Right cardiac atrium (tissue), 5 donors: ENCODE measurements at regions of chr7 and their contacts with region 1.

Region 1: GRCh38 chr7:1569833-1570633 is at the start of gene PSMG3:
- DNase-seq: peak; percentile 95 to 98 (median 97)
- ATAC-seq: peak; percentile 97 to 98
- H3K4me3 ChIP-seq: peak within 1 kb of the TSS; percentile 78
- H3K27ac ChIP-seq: peak within 1 kb of the TSS; percentile 90
- H3K4me1 ChIP-seq: no peaks in the 10 kb centered on the region
- H3K27me3 ChIP-seq: no peaks in the 10 kb centered on the region
- total RNA-seq, gene PSMG3: 11.6 to 16.2 (median 13.9) TPM

Region 2: GRCh38 chr7:1397491-1398327 is 172.3 kb before region 1 on chr7:
- intact Hi-C with region 1: no loop called
- DNase-seq: no peak
- ATAC-seq: no peak
- H3K4me3 ChIP-seq: no peak overlapping the region
- H3K27ac ChIP-seq: no peak overlapping the region
- H3K4me1 ChIP-seq: no peaks in the 10 kb centered on the region
- H3K27me3 ChIP-seq: no peaks in the 10 kb centered on the region

Region 3: DNA sequence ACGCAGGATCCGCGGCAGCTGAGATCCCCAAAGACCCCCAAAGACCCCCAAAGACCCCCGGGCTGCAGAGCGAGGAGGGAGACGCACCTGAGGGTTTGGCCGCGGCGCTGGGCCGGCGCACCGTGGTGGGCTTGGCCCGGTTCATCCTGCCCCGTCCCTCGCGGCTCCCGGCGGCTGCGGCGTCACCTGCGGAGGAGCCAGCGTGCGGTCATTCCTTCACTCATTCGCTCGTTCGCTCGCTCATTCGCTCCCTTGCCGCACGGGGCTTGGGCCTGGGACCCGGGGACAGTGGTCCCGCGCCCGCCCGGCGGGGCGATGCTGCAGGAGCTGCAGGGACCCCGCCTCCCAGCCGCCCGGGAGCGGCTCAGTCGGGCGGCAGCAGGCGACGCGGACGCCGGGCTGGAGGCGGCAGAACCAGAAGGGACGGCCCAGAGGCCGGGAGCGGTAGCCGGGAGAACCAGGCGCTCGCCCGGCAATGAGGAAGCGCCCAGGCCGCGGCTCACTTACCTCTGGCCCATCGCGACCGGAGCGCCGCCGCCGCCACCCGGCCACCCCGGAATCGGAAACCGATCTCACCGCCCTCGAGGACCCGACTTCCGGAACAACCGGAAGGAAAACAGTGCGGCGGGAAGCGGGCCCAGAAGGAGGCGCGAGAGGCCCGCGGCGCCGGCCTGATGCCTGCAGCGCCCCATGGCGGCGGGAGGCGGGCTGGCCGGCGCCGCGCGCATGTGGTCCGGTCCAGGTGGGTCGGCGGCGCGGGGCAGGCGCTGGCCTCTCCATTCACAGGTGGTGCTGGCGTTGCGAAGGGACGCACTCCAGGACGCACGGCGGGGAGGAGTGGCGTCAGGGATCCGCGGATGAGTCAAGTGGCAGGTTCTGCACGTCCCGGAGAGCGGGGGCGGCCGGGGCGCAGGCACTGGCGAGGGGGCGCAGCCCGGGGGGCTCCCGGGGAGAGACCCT is 65.9 kb before region 1 on chr7 and contains the start of gene INTS1:
- intact Hi-C with region 1: loop called in 1 of 4 experiments (anchors 10 kb)
- DNase-seq: peak; percentile 92 to 96 (median 96)
- ATAC-seq: peak; percentile 89 to 94
- H3K4me3 ChIP-seq: peak within 1 kb of the TSS; percentile 74
- H3K27ac ChIP-seq: no peak within 1 kb of the TSS
- H3K4me1 ChIP-seq: peaks cover 7% of the 10 kb centered on the region
- H3K27me3 ChIP-seq: no peaks in the 10 kb centered on the region
- total RNA-seq, gene INTS1: 30.6 to 48.3 (median 46.3) TPM

Region 4: GRCh38 chr7:2209146-2209960 is 639.3 kb after region 1 on chr7:
- intact Hi-C with region 1: loop called in 2 of 4 experiments (anchors 10 kb)
- DNase-seq: peak; percentile 77 to 90 (median 90)
- ATAC-seq: peak; percentile 58 to 75
- H3K4me3 ChIP-seq: no peak overlapping the region
- H3K27ac ChIP-seq: no peak overlapping the region
- H3K4me1 ChIP-seq: peaks cover 2% of the 10 kb centered on the region
- H3K27me3 ChIP-seq: no peaks in the 10 kb centered on the region

Region 5: DNA sequence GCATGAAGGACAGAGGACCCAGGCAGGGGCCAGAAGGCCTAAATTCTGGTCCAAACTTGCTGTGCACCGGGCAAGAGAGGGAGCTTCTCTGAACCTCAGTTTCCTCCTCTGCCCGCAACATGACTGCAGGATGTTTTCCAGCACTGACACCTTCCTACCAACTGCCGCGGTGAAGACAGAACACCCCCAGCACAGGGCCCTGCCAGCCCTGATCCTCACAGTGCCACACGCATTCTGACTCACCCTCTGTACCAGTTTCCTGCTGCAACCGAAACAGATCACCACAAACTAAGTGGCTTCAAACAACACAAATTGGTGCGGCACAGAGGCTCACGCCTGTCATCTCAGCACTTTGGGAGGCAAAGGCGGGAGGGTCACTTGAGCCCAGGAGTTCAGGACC is 644.6 kb after region 1 on chr7:
- intact Hi-C with region 1: loop called in 2 of 4 experiments (anchors 10 kb)
- DNase-seq: peak in 2 of 3 donors; percentile 31 to 57
- ATAC-seq: peak; percentile 42 to 61
- H3K4me3 ChIP-seq: no peak overlapping the region
- H3K27ac ChIP-seq: peak overlapping the region; percentile 89
- H3K4me1 ChIP-seq: peaks cover 4% of the 10 kb centered on the region
- H3K27me3 ChIP-seq: no peaks in the 10 kb centered on the region

Region 6: DNA sequence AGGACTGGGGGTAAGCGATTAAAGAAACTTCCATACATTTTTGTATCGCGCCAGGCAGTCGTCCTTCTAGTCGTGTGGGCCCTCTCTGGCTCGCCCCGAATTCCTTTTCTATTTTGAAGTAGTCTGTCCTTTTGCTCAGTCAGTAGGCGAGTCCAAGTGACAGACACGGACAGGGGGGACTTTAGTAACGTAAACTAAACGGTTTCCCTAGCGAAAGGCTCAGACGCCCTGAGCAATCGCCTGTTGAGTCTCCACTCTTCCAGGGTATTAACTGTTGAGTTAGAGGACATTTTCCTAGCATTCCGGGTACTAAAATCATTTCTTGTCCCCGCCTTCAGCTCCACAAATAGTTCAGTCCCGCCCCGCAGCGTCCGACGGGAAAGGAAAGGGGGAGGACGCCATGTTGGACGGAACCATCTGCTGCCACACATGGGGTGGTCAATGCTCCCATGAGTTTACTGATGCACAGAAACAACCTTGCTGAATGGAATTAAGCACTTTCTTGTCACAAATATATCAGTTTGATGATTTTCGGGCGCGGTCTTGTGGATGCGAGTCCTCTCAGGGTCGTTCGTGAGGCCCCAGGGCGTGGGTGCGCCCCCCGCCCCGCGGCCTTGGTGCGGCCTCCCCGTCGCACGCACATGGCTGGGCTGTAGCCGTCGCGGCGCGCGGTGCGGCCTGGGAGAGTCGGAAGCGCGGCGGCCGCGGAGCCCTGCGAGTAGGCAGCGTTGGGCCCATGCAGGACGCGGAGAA is 784.3 kb after region 1 on chr7 and contains the start of gene EIF3B:
- intact Hi-C with region 1: loop called in 1 of 4 experiments (anchors 10 kb)
- DNase-seq: peak; percentile 92 to 96 (median 95)
- ATAC-seq: peak; percentile 95 to 96
- H3K4me3 ChIP-seq: peak within 1 kb of the TSS; percentile 79
- H3K27ac ChIP-seq: peak within 1 kb of the TSS; percentile 98
- H3K4me1 ChIP-seq: peaks cover 6% of the 10 kb centered on the region
- H3K27me3 ChIP-seq: no peaks in the 10 kb centered on the region
- total RNA-seq, gene EIF3B: 64.9 to 81.7 (median 72.8) TPM